Testis (tissue), 5 donors: ENCODE measurements at regions of chr1 and their contacts with region 1.

Region 1: DNA sequence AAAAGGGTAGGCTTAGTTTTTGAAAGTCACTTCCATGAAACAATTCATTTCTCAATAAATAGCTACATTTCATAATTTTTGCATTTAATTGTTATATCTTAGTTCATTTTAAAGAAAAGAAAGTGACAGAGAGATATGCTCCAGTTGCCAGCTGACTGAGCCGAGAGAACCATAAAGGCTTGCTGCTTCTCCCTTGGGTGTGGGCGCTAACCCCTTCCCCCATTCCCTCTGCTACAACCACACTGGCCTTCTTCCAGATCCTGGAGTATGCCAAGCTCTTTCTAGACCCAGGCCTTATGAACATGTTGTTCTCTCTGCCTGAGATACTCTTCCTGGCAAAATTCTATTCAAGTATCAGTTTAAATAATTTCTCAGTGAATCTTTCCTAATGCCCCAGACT is 12.3 kb downstream of the SORT1 start:
- DNase-seq: peak; percentile 82
- H3K4me3 ChIP-seq: no peak overlapping the region
- H3K27ac ChIP-seq: peak overlapping the region in 1 of 2 donors; percentile 76
- H3K4me1 ChIP-seq: peaks cover 37% of the 10 kb centered on the region
- H3K27me3 ChIP-seq: no peaks in the 10 kb centered on the region
- CTCF ChIP-seq: no peak
- POLR2A ChIP-seq: no peak

Region 2: GRCh38 chr1:109307274-109308021 is 78.0 kb before region 1 on chr1:
- intact Hi-C with region 1: loop called (anchors 10 kb)
- DNase-seq: no peak
- H3K4me3 ChIP-seq: no peak overlapping the region
- H3K27ac ChIP-seq: peak overlapping the region; percentile 70 to 72
- H3K4me1 ChIP-seq: peaks cover 57% of the 10 kb centered on the region
- H3K27me3 ChIP-seq: no peaks in the 10 kb centered on the region
- CTCF ChIP-seq: no peak
- POLR2A ChIP-seq: no peak

Region 3: GRCh38 chr1:109483672-109484518 is 98.5 kb after region 1 on chr1 and contains the start of gene ATXN7L2:
- intact Hi-C with region 1: no loop called
- DNase-seq: peak; percentile 92
- H3K4me3 ChIP-seq: peak within 1 kb of the TSS; percentile 73 to 83
- H3K27ac ChIP-seq: peak within 1 kb of the TSS; percentile 94 to 97
- H3K4me1 ChIP-seq: peaks cover 20% of the 10 kb centered on the region
- H3K27me3 ChIP-seq: no peaks in the 10 kb centered on the region
- CTCF ChIP-seq: no peak
- POLR2A ChIP-seq: no peak
- total RNA-seq, gene ATXN7L2: 40.9 to 55.2 TPM